ENCODE measurements at regions of chr6 and their contacts with region 1.

Region 1: DNA sequence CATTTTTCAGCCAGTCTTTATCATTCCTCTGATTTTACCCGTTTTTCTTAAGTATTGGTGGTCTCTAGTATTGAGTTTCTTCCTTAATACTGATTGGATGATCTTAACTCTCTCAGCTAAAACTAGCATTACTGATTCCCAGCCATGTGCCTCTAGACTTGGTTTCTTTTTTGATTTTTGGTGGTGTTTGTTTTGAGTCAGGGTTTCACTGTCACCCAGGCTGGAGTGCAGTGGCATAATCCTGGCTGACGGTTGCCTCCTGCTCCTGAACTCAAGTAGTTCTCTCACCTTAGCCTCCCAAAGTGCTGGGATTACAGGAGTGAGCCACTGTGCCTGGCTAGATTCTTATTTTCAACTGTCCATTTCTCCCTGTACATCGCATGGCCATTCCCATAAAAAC is 24.9 kb downstream of the DPPA5 start:
- DNase-seq: no peak
- ATAC-seq: no peak
- H3K4me3 ChIP-seq: no peak overlapping the region
- H3K27ac ChIP-seq: no peak overlapping the region
- H3K4me1 ChIP-seq: peaks cover 3% of the 10 kb centered on the region; the same call in 1 of the 2 replicates
- H3K27me3 ChIP-seq: no peaks in the 10 kb centered on the region
- CTCF ChIP-seq: no peak

Region 2: DNA sequence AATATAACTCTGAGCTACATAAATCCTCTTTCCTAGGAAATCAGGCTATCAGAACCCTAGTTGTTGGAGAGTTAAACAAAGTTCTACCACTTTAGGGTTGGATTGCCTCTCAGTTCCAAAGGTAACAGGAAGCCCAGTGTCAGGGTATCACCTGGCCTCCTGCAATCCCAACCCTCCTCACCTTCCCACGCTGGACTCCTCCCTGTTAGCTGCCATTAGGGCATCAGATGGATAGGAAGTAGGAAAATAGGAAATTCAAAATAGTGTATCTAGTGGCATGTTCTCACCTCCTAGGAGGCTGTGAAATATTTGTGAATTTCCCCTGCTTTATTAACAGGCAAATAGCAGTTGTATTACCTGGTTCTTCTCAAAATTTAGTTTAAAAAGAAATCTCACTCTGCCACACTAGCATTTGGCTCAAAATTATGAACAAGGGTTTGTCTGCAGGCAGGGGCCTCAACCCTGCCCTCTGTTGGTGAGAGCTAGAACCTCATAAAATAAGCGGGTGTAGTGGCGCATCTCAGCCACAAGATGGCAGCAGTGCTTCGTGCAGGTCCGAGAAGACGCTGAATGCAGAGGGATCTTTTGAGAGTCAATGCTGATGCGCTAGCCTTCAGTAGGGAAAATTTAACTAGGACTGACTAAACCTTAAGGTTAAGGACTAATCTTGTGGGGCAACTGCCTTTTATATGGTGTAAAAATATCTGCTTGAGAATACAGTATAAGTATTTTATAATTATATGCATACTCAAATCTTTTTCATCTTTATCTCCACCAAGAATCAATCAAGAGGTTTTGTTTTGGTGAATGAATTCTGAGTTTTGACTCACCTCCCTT is 917.1 kb before region 1 on chr6:
- CTCF ChIA-PET with region 1: no interaction called
- POLR2A ChIA-PET with region 1: no interaction called
- intact Hi-C with region 1: loop called (anchors 1 kb)
- DNase-seq: peak; percentile 80
- ATAC-seq: peak; percentile 85
- H3K4me3 ChIP-seq: no peak overlapping the region
- H3K27ac ChIP-seq: no peak overlapping the region
- H3K4me1 ChIP-seq: peaks cover 7% of the 10 kb centered on the region
- H3K27me3 ChIP-seq: no peaks in the 10 kb centered on the region
- CTCF ChIP-seq: peak; percentile 99

Region 3: GRCh38 chr6:72619883-72620696 is 709.1 kb before region 1 on chr6:
- CTCF ChIA-PET with region 1: no interaction called
- POLR2A ChIA-PET with region 1: no interaction called
- intact Hi-C with region 1: loop called (anchors 10 kb)
- DNase-seq: no peak
- ATAC-seq: no peak
- H3K4me3 ChIP-seq: no peak overlapping the region
- H3K27ac ChIP-seq: no peak overlapping the region
- H3K4me1 ChIP-seq: no peaks in the 10 kb centered on the region; the same call in 1 of the 2 replicates
- H3K27me3 ChIP-seq: no peaks in the 10 kb centered on the region
- CTCF ChIP-seq: no peak

Region 4: DNA sequence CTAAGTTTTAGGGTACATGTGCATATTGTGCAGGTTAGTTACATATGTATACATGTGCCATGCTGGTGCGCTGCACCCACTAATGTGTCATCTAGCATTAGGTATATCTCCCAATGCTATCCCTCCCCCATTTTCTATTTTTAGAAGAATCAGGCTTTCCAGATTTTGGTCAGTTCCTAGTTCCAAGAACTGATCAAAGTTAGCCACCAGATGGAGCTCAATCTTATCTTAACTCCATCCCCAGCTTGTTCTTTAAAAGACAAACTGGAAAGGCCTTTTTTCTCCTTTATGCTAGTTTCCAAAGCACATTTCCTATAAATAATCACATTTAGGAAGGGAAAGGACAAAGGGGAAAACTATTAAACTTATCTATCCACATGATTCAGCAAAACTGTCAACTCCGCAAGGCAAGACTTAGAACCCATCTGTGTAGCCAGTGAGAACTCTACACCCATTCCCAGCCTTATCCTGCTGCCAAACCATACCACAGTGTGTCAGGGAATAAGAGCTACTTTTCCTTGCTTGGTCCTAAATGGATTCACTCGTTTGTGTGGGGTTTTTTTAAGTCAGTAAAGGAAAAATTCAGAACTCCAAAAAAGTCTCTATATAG is 43.4 kb before region 1 on chr6:
- CTCF ChIA-PET with region 1: interaction called, 12 read pairs
- POLR2A ChIA-PET with region 1: no interaction called
- intact Hi-C with region 1: loop called (anchors 2 kb)
- DNase-seq: peak; percentile 60
- ATAC-seq: peak; percentile 68
- H3K4me3 ChIP-seq: no peak overlapping the region
- H3K27ac ChIP-seq: no peak overlapping the region
- H3K4me1 ChIP-seq: peaks cover 3% of the 10 kb centered on the region; the same call in 1 of the 2 replicates
- H3K27me3 ChIP-seq: no peaks in the 10 kb centered on the region
- CTCF ChIP-seq: peak; percentile 54

Region 5: GRCh38 chr6:73388800-73389512 is 59.8 kb after region 1 on chr6:
- CTCF ChIA-PET with region 1: interaction called, 3 read pairs
- POLR2A ChIA-PET with region 1: no interaction called
- intact Hi-C with region 1: loop called (anchors 5 kb)
- DNase-seq: peak; percentile 77
- ATAC-seq: peak; percentile 87
- H3K4me3 ChIP-seq: peak overlapping the region; percentile 79
- H3K27ac ChIP-seq: peak overlapping the region; percentile 85
- H3K4me1 ChIP-seq: no peaks in the 10 kb centered on the region
- H3K27me3 ChIP-seq: no peaks in the 10 kb centered on the region
- CTCF ChIP-seq: peak; percentile 73

Region 6: GRCh38 chr6:73665686-73666319 is 336.6 kb after region 1 on chr6:
- CTCF ChIA-PET with region 1: no interaction called
- POLR2A ChIA-PET with region 1: no interaction called
- intact Hi-C with region 1: no loop called
- DNase-seq: peak; percentile 62
- ATAC-seq: peak; percentile 96
- H3K4me3 ChIP-seq: no peak overlapping the region
- H3K27ac ChIP-seq: peak overlapping the region; percentile 55
- H3K4me1 ChIP-seq: peaks cover 13% of the 10 kb centered on the region
- H3K27me3 ChIP-seq: no peaks in the 10 kb centered on the region
- CTCF ChIP-seq: no peak

Measured in PC-3 (cell line).